ENCODE measurements at regions of chr12 and their contacts with region 1.

Region 1: GRCh38 chr12:55227643-55228042 is 6.8 kb downstream of the OR10A7 start:
- DNase-seq: no peak
- H3K4me3 Mint-ChIP-seq: no peak overlapping the region
- H3K27ac Mint-ChIP-seq: no peak overlapping the region
- H3K4me1 Mint-ChIP-seq: no peaks in the 10 kb centered on the region
- H3K27me3 Mint-ChIP-seq: peaks cover 13% of the 10 kb centered on the region

Region 2: GRCh38 chr12:54460317-54460923 is 767.2 kb before region 1 on chr12:
- CTCF ChIA-PET with region 1: interaction called, 10 read pairs
- intact Hi-C with region 1: no loop called
- DNase-seq: no peak
- H3K4me3 Mint-ChIP-seq: no peak overlapping the region
- H3K27ac Mint-ChIP-seq: no peak overlapping the region
- H3K4me1 Mint-ChIP-seq: no peaks in the 10 kb centered on the region
- H3K27me3 Mint-ChIP-seq: peaks cover 4% of the 10 kb centered on the region

Region 3: GRCh38 chr12:55171445-55171844 is 56.2 kb before region 1 on chr12:
- CTCF ChIA-PET with region 1: no interaction called
- intact Hi-C with region 1: no loop called
- DNase-seq: no peak
- H3K4me3 Mint-ChIP-seq: no peak overlapping the region
- H3K27ac Mint-ChIP-seq: no peak overlapping the region
- H3K4me1 Mint-ChIP-seq: peaks cover 3% of the 10 kb centered on the region
- H3K27me3 Mint-ChIP-seq: peaks cover 9% of the 10 kb centered on the region